ENCODE measurements at regions of chr3 and their contacts with region 1.

Region 1: GRCh38 chr3:101061312-101061711 is 68.1 kb upstream of the ABI3BP start:
- DNase-seq: no peak
- ATAC-seq: no peak
- H3K4me3 ChIP-seq: no peak overlapping the region
- H3K27ac ChIP-seq: no peak overlapping the region
- H3K4me1 ChIP-seq: no peaks in the 10 kb centered on the region
- H3K27me3 ChIP-seq: no peaks in the 10 kb centered on the region
- CTCF ChIP-seq: no peak

Region 2: DNA sequence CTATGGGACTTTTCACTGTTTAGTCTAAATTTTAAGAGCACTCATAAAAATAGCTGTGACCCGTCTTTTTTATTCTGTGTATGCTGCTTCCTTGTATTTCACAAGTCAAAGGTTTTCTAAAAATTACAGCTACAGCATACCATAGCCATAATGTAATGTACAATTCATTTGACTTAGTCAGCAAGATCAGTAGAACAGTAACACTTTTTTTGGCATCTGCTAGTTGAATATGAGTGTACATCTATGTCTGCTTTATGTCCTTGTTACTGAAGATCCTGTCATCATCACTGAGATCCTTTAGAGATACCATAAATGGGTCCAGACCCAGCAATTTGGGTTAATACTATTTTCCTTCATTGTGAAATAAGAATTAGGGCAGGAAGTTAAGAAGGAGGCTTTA is 1201.5 kb before region 1 on chr3:
- intact Hi-C with region 1: no loop called
- DNase-seq: no peak
- ATAC-seq: peak; percentile 35 to 78 (median 63)
- H3K4me3 ChIP-seq: no peak overlapping the region
- H3K27ac ChIP-seq: peak overlapping the region; percentile 71
- H3K4me1 ChIP-seq: peaks cover 56% of the 10 kb centered on the region
- H3K27me3 ChIP-seq: no peaks in the 10 kb centered on the region
- CTCF ChIP-seq: no peak

Region 3: DNA sequence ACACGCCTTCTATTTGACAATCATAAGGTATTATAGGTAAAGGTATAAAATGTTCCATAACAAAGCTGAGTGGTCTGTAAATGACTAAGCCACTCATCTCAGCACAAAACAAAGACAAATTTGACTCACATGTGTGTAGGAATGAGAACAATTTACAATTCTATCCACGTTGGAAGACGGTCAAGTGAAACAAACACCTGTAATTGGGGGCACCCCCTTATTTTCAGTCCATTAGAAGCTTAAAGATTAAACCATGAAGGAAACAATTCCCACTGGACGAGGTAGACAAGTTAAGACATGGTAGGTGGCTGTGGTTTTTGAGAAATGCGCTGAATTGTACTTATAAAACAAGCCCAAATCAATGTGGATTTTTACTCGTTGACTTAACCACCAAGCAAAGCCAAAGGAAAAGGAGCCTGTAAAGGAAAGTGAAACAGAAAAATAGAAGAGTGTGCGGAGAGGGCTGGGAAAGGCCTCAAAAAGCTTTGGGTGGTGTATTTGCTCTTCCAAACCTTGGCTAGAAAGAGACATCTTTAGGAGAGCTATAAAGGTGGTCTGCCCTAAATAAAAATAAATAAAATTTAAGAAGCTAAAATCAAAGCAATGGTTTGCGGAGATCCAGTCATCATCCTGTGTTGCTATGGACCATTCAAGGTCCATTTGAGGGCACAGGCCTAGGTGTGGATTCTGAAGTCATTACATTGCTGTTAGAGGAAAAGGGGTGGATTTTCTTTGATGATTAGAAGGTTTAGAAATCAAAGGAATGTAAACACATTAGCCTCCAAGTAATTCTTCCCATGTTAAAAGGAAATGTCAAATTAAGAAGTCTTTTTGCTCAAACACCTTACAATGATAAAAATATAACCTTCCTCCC is 217.0 kb before region 1 on chr3:
- intact Hi-C with region 1: no loop called
- DNase-seq: no peak
- ATAC-seq: no peak
- H3K4me3 ChIP-seq: no peak overlapping the region
- H3K27ac ChIP-seq: no peak overlapping the region
- H3K4me1 ChIP-seq: no peaks in the 10 kb centered on the region
- H3K27me3 ChIP-seq: no peaks in the 10 kb centered on the region
- CTCF ChIP-seq: no peak

Region 4: DNA sequence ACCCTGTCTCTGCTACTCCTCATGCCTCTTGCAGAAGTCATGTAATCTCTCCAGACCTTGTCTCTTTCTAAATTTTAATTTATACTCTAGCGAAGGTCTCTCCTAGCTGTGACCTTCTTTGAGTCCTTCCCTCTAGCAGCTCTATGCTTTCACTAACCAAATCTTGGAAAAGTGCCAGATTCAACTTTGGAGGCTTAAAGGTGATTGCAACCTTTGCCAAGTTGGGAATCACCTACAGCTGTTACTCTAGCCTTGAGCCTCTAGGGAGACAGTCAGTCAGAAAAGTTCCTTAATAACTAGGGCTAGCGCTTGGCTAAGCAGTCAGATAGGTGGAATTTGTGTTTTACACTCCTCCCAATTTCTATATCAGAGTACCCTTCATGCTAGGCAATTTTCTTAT is 22.0 kb before region 1 on chr3:
- intact Hi-C with region 1: loop called in 1 of 2 experiments (anchors 2 kb)
- DNase-seq: no peak
- ATAC-seq: no peak
- H3K4me3 ChIP-seq: no peak overlapping the region
- H3K27ac ChIP-seq: no peak overlapping the region
- H3K4me1 ChIP-seq: no peaks in the 10 kb centered on the region
- H3K27me3 ChIP-seq: no peaks in the 10 kb centered on the region
- CTCF ChIP-seq: no peak

Region 5: DNA sequence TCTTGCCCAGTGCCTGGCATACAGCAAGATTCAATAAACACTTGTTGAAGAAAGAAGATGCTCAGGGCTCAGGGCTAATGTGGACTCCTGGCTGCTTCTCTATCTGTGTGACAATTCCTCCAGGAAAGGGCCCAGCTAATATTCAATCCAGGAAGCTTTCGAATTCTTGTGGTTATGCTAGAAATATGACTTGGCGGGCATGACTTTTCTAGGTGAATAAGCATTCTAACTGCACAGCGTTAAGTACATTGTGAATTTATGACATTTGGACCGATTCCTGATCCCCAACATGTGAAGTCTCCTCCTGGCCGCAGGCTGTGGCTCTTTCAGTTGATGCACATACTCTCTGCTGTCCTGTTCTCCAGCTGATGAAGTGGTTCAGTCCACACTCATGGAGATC is 142.1 kb after region 1 on chr3:
- intact Hi-C with region 1: no loop called
- DNase-seq: no peak
- ATAC-seq: no peak
- H3K4me3 ChIP-seq: no peak overlapping the region
- H3K27ac ChIP-seq: no peak overlapping the region
- H3K4me1 ChIP-seq: no peaks in the 10 kb centered on the region
- H3K27me3 ChIP-seq: no peaks in the 10 kb centered on the region
- CTCF ChIP-seq: no peak